ENCODE measurements at regions of chr11 and their contacts with region 1.

Region 1: GRCh38 chr11:27472398-27473016 is at the start of gene LGR4:
- DNase-seq: peak; percentile 97 to 98
- H3K4me3 ChIP-seq: peak within 1 kb of the TSS; percentile 67
- H3K4me3 Mint-ChIP-seq: peak within 1 kb of the TSS; percentile 87
- H3K27ac Mint-ChIP-seq: peak within 1 kb of the TSS; percentile 88
- H3K4me1 ChIP-seq: peaks cover 31% of the 10 kb centered on the region
- H3K4me1 Mint-ChIP-seq: peaks cover 6% of the 10 kb centered on the region
- H3K27me3 ChIP-seq: no peaks in the 10 kb centered on the region
- H3K27me3 Mint-ChIP-seq: no peaks in the 10 kb centered on the region
- CTCF ChIP-seq: no peak
- total RNA-seq, gene LGR4: 34.7 and 37.1 TPM in 2 replicates

Region 2: DNA sequence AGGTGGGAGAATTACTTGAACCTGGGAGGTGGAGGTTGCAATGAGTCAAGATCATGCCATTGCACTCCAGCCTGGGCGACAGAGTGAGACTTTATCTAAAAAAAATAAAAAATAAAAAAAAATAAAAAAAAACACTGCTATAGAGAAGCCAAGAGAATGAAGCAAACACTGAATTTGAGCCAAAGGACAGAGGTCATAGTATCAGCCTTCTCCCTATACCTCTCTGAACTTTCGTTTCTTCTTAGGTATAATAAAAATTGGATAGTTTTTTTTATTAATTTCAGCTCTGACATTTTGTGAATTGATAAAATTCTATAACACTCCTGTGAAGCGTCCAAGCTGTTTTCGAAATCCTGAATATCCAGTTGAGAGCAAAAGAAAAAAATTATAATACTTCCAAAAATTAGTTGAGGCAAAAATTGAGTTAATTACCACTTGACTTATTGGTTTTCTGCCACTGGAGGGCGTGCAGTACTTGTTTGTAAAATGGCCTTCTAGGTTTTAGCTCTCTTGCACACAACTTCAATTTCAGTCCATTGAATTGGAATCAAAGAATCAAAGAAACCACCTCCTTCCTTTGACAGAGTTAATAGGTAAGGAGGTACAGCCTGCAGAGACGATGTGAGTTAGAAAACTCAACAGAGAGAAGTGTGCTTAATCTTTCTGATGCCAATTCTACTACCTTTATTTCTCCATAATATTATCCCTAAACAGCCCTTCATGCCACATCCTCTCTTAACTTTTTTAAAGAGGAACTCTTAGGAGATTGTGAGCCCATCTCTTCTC is 288.6 kb before region 1 on chr11:
- CTCF ChIA-PET with region 1: interaction called, 8 read pairs
- POLR2A ChIA-PET with region 1: no interaction called
- intact Hi-C with region 1: loop called (anchors 5 kb)
- DNase-seq: peak; percentile 54 to 64
- H3K4me3 ChIP-seq: no peak overlapping the region
- H3K4me3 Mint-ChIP-seq: no peak overlapping the region
- H3K27ac Mint-ChIP-seq: no peak overlapping the region
- H3K4me1 ChIP-seq: peaks cover 26% of the 10 kb centered on the region
- H3K4me1 Mint-ChIP-seq: peaks cover 15% of the 10 kb centered on the region
- H3K27me3 ChIP-seq: no peaks in the 10 kb centered on the region
- H3K27me3 Mint-ChIP-seq: no peaks in the 10 kb centered on the region
- CTCF ChIP-seq: peak; percentile 73 to 83

Region 3: GRCh38 chr11:27296497-27296896 is 176.0 kb before region 1 on chr11:
- CTCF ChIA-PET with region 1: interaction called, 8 read pairs
- POLR2A ChIA-PET with region 1: no interaction called
- intact Hi-C with region 1: loop called (anchors 1 kb)
- DNase-seq: peak in 1 of 2 experiments; percentile 59
- H3K4me3 ChIP-seq: no peak overlapping the region
- H3K4me3 Mint-ChIP-seq: no peak overlapping the region
- H3K27ac Mint-ChIP-seq: no peak overlapping the region
- H3K4me1 ChIP-seq: no peaks in the 10 kb centered on the region
- H3K4me1 Mint-ChIP-seq: peaks cover 12% of the 10 kb centered on the region
- H3K27me3 ChIP-seq: no peaks in the 10 kb centered on the region
- H3K27me3 Mint-ChIP-seq: no peaks in the 10 kb centered on the region
- CTCF ChIP-seq: peak; percentile 61 to 83

Region 4: DNA sequence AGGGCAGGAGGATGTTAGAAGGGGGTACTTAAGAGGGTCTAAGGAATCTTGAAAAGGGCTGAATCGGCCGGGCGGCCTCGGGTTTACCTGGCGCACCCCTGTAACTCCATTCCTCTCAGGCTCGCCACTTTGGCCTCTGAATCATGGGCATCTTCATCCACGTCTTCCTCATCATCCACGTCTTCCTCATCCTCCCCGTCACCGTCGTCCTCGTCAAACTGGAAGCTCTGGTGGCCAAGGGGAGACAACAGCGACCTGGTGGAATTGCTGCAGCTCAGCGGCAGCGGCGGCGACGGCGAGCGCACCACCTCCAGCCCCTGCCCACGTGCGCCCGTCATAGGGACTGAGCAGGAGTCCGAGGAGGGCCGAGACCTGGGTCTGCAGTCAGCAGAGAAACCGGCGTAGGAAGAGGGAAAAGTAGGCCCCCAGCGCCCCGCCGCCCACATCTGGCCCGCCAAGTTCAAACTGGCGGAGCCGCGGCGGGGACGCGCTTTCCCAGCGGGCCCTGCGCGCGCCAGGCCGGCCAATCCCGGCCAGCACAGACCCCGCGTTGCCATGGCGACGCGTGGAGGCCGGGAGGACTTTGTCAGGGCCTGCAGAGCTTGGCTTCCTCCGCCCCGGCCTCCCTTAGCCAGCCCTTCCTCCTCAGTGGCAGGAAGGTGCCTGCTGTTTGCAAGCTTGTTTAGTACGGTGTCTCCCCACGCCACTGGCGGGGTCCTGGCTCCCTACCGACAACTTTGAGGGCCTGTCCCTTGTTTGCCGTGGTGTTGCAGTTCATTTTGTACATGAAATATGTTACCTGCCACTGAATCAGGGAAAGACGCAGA is 109.5 kb before region 1 on chr11 and contains the start of gene CCDC34:
- CTCF ChIA-PET with region 1: interaction called, 9 read pairs
- POLR2A ChIA-PET with region 1: interaction called, 6 read pairs
- intact Hi-C with region 1: loop called (anchors 1 kb)
- DNase-seq: peak; percentile 93 to 95
- H3K4me3 ChIP-seq: peak within 1 kb of the TSS; percentile 80
- H3K4me3 Mint-ChIP-seq: peak within 1 kb of the TSS; percentile 94
- H3K27ac Mint-ChIP-seq: peak within 1 kb of the TSS; percentile 91
- H3K4me1 ChIP-seq: peaks cover 13% of the 10 kb centered on the region
- H3K4me1 Mint-ChIP-seq: peaks cover 36% of the 10 kb centered on the region
- H3K27me3 ChIP-seq: no peaks in the 10 kb centered on the region
- H3K27me3 Mint-ChIP-seq: no peaks in the 10 kb centered on the region
- CTCF ChIP-seq: no peak
- total RNA-seq, gene CCDC34: 25.0 and 25.7 TPM in 2 replicates

Region 5: GRCh38 chr11:27392278-27393114 is 80.0 kb before region 1 on chr11:
- CTCF ChIA-PET with region 1: interaction called, 7 read pairs
- POLR2A ChIA-PET with region 1: interaction called, 16 read pairs
- intact Hi-C with region 1: loop called (anchors 1 kb)
- DNase-seq: peak; percentile 51 to 67
- H3K4me3 ChIP-seq: no peak overlapping the region
- H3K4me3 Mint-ChIP-seq: peak overlapping the region; percentile 22
- H3K27ac Mint-ChIP-seq: peak overlapping the region; percentile 97
- H3K4me1 ChIP-seq: peaks cover 92% of the 10 kb centered on the region
- H3K4me1 Mint-ChIP-seq: peaks cover 56% of the 10 kb centered on the region
- H3K27me3 ChIP-seq: no peaks in the 10 kb centered on the region
- H3K27me3 Mint-ChIP-seq: no peaks in the 10 kb centered on the region
- CTCF ChIP-seq: no peak

Region 6: GRCh38 chr11:27433742-27434141 is 38.8 kb before region 1 on chr11:
- CTCF ChIA-PET with region 1: no interaction called
- POLR2A ChIA-PET with region 1: no interaction called
- intact Hi-C with region 1: no loop called
- DNase-seq: no peak
- H3K4me3 ChIP-seq: no peak overlapping the region
- H3K4me3 Mint-ChIP-seq: no peak overlapping the region
- H3K27ac Mint-ChIP-seq: no peak overlapping the region
- H3K4me1 ChIP-seq: no peaks in the 10 kb centered on the region
- H3K4me1 Mint-ChIP-seq: peaks cover 2% of the 10 kb centered on the region
- H3K27me3 ChIP-seq: no peaks in the 10 kb centered on the region
- H3K27me3 Mint-ChIP-seq: no peaks in the 10 kb centered on the region
- CTCF ChIP-seq: no peak

Region 7: GRCh38 chr11:27459191-27459590 is 13.3 kb before region 1 on chr11:
- CTCF ChIA-PET with region 1: interaction called, 15 read pairs
- POLR2A ChIA-PET with region 1: interaction called, 17 read pairs
- intact Hi-C with region 1: no loop called
- DNase-seq: no peak
- H3K4me3 ChIP-seq: no peak overlapping the region
- H3K4me3 Mint-ChIP-seq: no peak overlapping the region
- H3K27ac Mint-ChIP-seq: no peak overlapping the region
- H3K4me1 ChIP-seq: peaks cover 29% of the 10 kb centered on the region
- H3K4me1 Mint-ChIP-seq: peaks cover 56% of the 10 kb centered on the region
- H3K27me3 ChIP-seq: no peaks in the 10 kb centered on the region
- H3K27me3 Mint-ChIP-seq: no peaks in the 10 kb centered on the region
- CTCF ChIP-seq: no peak

Region 8: GRCh38 chr11:27698872-27699474 is 226.5 kb after region 1 on chr11:
- CTCF ChIA-PET with region 1: no interaction called
- POLR2A ChIA-PET with region 1: no interaction called
- intact Hi-C with region 1: no loop called
- DNase-seq: peak; percentile 89 to 91
- H3K4me3 ChIP-seq: peak overlapping the region; percentile 70
- H3K4me3 Mint-ChIP-seq: peak overlapping the region; percentile 90
- H3K27ac Mint-ChIP-seq: peak overlapping the region; percentile 74
- H3K4me1 ChIP-seq: peaks cover 17% of the 10 kb centered on the region
- H3K4me1 Mint-ChIP-seq: peaks cover 20% of the 10 kb centered on the region
- H3K27me3 ChIP-seq: no peaks in the 10 kb centered on the region
- H3K27me3 Mint-ChIP-seq: no peaks in the 10 kb centered on the region
- CTCF ChIP-seq: peak; percentile 87 to 97

Measured in Caco-2 (cell line).